ENCODE measurements at regions of chr7 and their contacts with region 1.

Region 1: DNA sequence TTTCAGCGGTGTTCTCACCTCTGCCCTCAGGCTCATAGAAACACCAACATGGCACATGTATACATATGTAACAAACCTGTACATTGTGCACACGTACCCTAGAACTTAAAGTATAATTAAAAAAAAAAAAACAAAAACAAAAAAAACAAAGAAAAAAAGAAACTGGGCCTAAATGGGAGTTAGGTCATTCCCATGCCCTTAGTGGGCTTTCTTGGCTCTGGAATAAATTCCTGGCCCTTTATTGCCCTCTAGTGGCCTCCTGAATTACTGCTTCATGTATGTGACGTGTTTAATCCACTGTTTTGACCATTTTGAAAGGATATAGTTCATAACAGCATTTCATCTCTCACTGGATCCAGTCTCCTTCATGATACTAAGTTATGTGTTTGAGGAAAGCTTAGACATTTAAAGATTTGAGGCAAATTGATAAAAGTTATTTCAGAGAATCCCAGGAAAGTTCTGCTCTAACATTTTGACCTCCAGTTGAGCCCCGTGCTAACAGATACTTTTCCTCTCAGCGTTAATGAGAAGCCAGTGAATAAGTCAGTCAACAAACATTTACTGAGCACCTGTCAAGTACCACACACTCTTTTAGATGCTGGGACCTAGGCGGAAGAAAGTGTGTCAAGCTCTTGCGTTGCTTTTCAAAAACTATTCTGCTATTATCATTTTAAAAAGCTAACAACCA is 54.7 kb upstream of the SYPL1 start:
- DNase-seq: peak; percentile 57
- ATAC-seq: peak; percentile 39
- H3K4me3 Mint-ChIP-seq: no peak overlapping the region
- H3K27ac Mint-ChIP-seq: no peak overlapping the region
- H3K4me1 Mint-ChIP-seq: no peaks in the 10 kb centered on the region
- H3K27me3 Mint-ChIP-seq: peaks cover 21% of the 10 kb centered on the region

Region 2: GRCh38 chr7:106056513-106057203 is 110.1 kb before region 1 on chr7:
- CTCF ChIA-PET with region 1: interaction called, 40 read pairs
- DNase-seq: peak; percentile 81
- ATAC-seq: peak; percentile 99
- H3K4me3 Mint-ChIP-seq: no peak overlapping the region
- H3K27ac Mint-ChIP-seq: peak overlapping the region; percentile 35
- H3K4me1 Mint-ChIP-seq: peaks cover 28% of the 10 kb centered on the region
- H3K27me3 Mint-ChIP-seq: peaks cover 20% of the 10 kb centered on the region

Region 3: GRCh38 chr7:106119719-106120118 is 47.1 kb before region 1 on chr7:
- CTCF ChIA-PET with region 1: no interaction called
- DNase-seq: no peak
- ATAC-seq: no peak
- H3K4me3 Mint-ChIP-seq: no peak overlapping the region
- H3K27ac Mint-ChIP-seq: no peak overlapping the region
- H3K4me1 Mint-ChIP-seq: peaks cover 13% of the 10 kb centered on the region
- H3K27me3 Mint-ChIP-seq: peaks cover 8% of the 10 kb centered on the region

Measured in activated CD8-positive, alpha-beta memory T cell treated with anti-CD3 and anti-CD28 coated beads, Interleukin-2, amount 10 ng/mL, durations not matched to agents 7 days and 5 days (primary cell).